ENCODE measurements at regions of chr17 and their contacts with region 1.

Region 1: DNA sequence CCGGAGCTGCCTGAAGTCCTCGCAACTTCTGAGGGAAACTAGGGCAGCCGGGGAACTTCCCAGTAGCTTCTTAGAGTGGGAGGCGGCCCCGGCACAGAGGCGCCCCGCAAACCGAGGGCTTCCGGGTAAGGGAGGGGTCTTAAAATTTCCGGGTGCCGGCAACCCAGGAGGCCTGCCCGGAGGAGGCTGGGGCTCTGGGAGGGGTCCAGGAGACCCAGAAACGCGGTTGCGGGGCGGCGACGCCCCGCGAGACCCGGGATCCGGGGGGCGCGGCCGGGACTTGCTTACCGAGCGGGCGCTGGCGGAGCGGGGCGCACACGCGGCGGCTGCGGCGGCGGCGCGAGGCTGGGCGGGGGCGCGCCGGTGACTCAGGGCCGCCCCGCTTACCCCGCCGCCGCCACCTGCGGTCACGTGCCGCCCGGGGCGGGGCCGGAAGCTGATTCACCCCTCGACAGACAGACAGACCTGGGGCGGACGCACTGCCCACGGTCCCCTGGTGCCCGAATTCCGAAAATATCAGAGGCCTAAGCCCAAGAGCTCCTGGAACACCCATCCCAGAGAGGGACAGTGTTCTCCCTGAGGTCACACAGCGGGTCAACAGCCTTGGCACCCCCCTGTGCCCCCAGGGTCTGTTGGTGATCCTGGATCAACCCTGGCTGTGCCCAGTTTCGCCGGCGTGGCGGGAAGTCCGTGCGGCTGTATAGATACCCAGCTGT is at the start of gene FAM83G:
- DNase-seq: peak; percentile 72 to 94
- H3K4me3 ChIP-seq: peak within 1 kb of the TSS; percentile 88
- H3K27ac ChIP-seq: peak within 1 kb of the TSS; percentile 63
- H3K4me1 ChIP-seq: peaks cover 37% of the 10 kb centered on the region
- H3K27me3 ChIP-seq: no peaks in the 10 kb centered on the region
- CTCF ChIP-seq: no peak
- total RNA-seq, gene FAM83G: 30.2 and 30.4 TPM in 2 replicates

Region 2: GRCh38 chr17:18117982-18118975 is 886.3 kb before region 1 on chr17:
- CTCF ChIA-PET with region 1: interaction called, 12 read pairs
- POLR2A ChIA-PET with region 1: no interaction called
- intact Hi-C with region 1: no loop called
- DNase-seq: no peak
- H3K4me3 ChIP-seq: no peak overlapping the region
- H3K27ac ChIP-seq: no peak overlapping the region
- H3K4me1 ChIP-seq: no peaks in the 10 kb centered on the region
- H3K27me3 ChIP-seq: no peaks in the 10 kb centered on the region
- CTCF ChIP-seq: no peak

Region 3: DNA sequence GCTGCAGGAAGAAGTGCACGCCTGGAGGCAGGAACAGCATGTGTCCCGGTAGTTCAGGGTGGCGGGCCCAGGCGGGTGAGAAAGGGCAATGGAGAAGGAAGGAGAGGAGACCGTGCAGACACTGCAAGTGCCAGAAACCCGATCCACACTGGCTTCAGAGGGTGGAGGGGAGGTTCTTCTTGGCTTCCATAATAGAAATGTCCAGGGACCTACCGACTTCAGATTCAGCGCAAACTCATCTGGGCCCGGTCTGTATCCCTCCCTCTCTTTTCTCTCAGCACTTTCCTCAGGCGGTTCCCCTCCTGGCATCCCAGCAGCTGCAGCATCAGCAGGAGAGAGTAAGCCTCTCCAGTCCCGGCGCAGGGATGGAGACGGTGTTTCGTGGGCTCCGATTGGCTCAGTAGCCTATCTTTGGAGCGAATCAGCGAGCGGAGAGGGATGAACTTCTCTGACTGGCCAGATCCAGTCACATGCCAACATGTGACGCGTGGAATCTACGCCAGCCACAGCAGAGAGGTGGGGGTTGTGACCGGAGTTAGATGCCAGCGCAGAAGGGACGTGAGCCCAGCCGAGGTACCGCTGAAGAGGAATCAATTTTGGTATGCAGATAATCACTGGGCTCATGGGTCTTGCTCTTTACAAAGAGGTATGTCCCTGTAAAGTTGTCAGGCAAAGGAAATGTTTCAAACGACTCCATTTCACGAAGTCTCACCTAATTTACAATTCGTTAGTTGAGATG is 148.6 kb before region 1 on chr17:
- CTCF ChIA-PET with region 1: no interaction called
- POLR2A ChIA-PET with region 1: interaction called, 9 read pairs
- intact Hi-C with region 1: loop called (anchors 5 kb)
- DNase-seq: peak; percentile 89 to 92
- H3K4me3 ChIP-seq: peak overlapping the region; percentile 59
- H3K27ac ChIP-seq: no peak overlapping the region
- H3K4me1 ChIP-seq: peaks cover 22% of the 10 kb centered on the region
- H3K27me3 ChIP-seq: no peaks in the 10 kb centered on the region
- CTCF ChIP-seq: no peak

Region 4: GRCh38 chr17:18932360-18933055 is 72.1 kb before region 1 on chr17:
- CTCF ChIA-PET with region 1: no interaction called
- POLR2A ChIA-PET with region 1: no interaction called
- intact Hi-C with region 1: no loop called
- DNase-seq: no peak
- H3K4me3 ChIP-seq: no peak overlapping the region
- H3K27ac ChIP-seq: no peak overlapping the region
- H3K4me1 ChIP-seq: no peaks in the 10 kb centered on the region
- H3K27me3 ChIP-seq: no peaks in the 10 kb centered on the region
- CTCF ChIP-seq: no peak

Region 5: GRCh38 chr17:18968945-18969887 is 35.4 kb before region 1 on chr17:
- CTCF ChIA-PET with region 1: no interaction called
- POLR2A ChIA-PET with region 1: interaction called, 7 read pairs
- intact Hi-C with region 1: loop called (anchors 2 kb)
- DNase-seq: peak; percentile 72 to 78
- H3K4me3 ChIP-seq: no peak overlapping the region
- H3K27ac ChIP-seq: peak overlapping the region; percentile 21
- H3K4me1 ChIP-seq: peaks cover 39% of the 10 kb centered on the region
- H3K27me3 ChIP-seq: no peaks in the 10 kb centered on the region
- CTCF ChIP-seq: no peak

Region 6: GRCh38 chr17:18992454-18993130 is 12.0 kb before region 1 on chr17:
- CTCF ChIA-PET with region 1: no interaction called
- POLR2A ChIA-PET with region 1: no interaction called
- intact Hi-C with region 1: no loop called
- DNase-seq: no peak
- H3K4me3 ChIP-seq: no peak overlapping the region
- H3K27ac ChIP-seq: no peak overlapping the region
- H3K4me1 ChIP-seq: no peaks in the 10 kb centered on the region
- H3K27me3 ChIP-seq: no peaks in the 10 kb centered on the region
- CTCF ChIP-seq: no peak